ENCODE measurements at regions of chr10 and their contacts with region 1.

Region 1: DNA sequence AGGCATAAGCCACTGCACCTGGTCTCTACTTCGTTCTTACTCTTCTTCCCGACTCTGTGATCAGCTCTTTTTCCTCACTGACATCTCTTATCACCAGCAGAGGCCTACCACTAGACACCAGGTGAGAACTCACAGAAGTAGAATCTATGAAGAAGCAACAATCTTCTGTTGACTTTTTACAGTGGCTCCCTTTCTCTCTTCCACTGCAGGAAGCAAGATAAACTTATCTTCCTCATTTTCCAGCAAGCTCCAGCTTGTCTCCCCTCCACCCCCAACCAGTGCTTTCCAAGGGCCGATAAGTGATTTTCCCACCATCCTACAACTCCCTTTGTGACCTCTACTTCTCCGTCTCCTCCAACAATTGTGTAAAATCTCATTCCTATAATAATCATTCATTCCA is 45.5 kb downstream of the TLX1 start:
- DNase-seq: no peak
- H3K4me3 ChIP-seq: no peak overlapping the region
- H3K27ac ChIP-seq: no peak overlapping the region
- H3K4me1 ChIP-seq: no peaks in the 10 kb centered on the region
- H3K27me3 ChIP-seq: peaks cover 40% of the 10 kb centered on the region
- CTCF ChIP-seq: no peak

Region 2: GRCh38 chr10:100446130-100446761 is 730.3 kb before region 1 on chr10:
- CTCF ChIA-PET with region 1: no interaction called
- POLR2A ChIA-PET with region 1: no interaction called
- intact Hi-C with region 1: no loop called
- DNase-seq: no peak
- H3K4me3 ChIP-seq: no peak overlapping the region
- H3K27ac ChIP-seq: no peak overlapping the region
- H3K4me1 ChIP-seq: 0 out of 2 replicates have a peak, but pooled peaks cover 5% of the 10 kb centered on the region
- H3K27me3 ChIP-seq: no peaks in the 10 kb centered on the region; the same call in 1 of the 2 replicates
- CTCF ChIP-seq: no peak

Region 3: GRCh38 chr10:100969187-100970075 is 207.1 kb before region 1 on chr10 and contains the start of gene SEMA4G:
- CTCF ChIA-PET with region 1: no interaction called
- POLR2A ChIA-PET with region 1: no interaction called
- intact Hi-C with region 1: no loop called
- DNase-seq: no peak
- H3K4me3 ChIP-seq: no peak within 1 kb of the TSS
- H3K27ac ChIP-seq: no peak within 1 kb of the TSS
- H3K4me1 ChIP-seq: no peaks in the 10 kb centered on the region
- H3K27me3 ChIP-seq: no peaks in the 10 kb centered on the region
- CTCF ChIP-seq: no peak; the same call in 1 of the 2 replicates
- total RNA-seq, gene SEMA4G: 0.70 and 0.83 TPM in 2 replicates

Region 4: DNA sequence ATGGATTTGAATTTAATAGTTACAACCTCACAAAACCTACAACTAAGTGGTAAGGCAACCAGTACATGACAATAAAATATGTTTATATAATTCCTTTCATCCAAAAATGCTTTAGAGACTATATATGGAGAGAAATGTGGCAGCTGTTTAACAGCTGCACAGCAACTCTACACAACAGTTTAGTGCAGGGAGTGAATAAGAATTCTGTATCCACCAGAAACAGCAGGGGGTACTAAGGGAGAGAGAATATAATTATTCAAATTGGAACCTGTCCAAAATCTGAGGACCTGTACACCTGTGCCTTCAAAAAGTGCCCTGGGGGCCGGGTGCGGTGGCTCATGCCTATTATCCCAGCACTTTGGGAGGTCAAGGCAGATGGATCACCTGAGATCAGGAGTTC is 361.9 kb after region 1 on chr10:
- CTCF ChIA-PET with region 1: no interaction called
- POLR2A ChIA-PET with region 1: interaction called, 20 read pairs
- intact Hi-C with region 1: no loop called
- DNase-seq: no peak
- H3K4me3 ChIP-seq: no peak overlapping the region
- H3K27ac ChIP-seq: no peak overlapping the region
- H3K4me1 ChIP-seq: no peaks in the 10 kb centered on the region
- H3K27me3 ChIP-seq: no peaks in the 10 kb centered on the region
- CTCF ChIP-seq: no peak